MCF 10A (cell line): ENCODE measurements at regions of chr13 and their contacts with region 1.

Region 1: GRCh38 chr13:48892053-48892690 is 83.5 kb upstream of the FNDC3A start:
- DNase-seq: peak; percentile 89
- H3K4me3 Mint-ChIP-seq: no peak overlapping the region
- H3K27ac Mint-ChIP-seq: peak overlapping the region; percentile 86
- H3K4me1 Mint-ChIP-seq: peaks cover 14% of the 10 kb centered on the region
- H3K27me3 Mint-ChIP-seq: no peaks in the 10 kb centered on the region
- CTCF ChIP-seq: no peak

Region 2: GRCh38 chr13:48679911-48680680 is 212.1 kb before region 1 on chr13:
- CTCF ChIA-PET with region 1: no interaction called
- POLR2A ChIA-PET with region 1: no interaction called
- intact Hi-C with region 1: no loop called
- DNase-seq: no peak
- H3K4me3 Mint-ChIP-seq: no peak overlapping the region
- H3K27ac Mint-ChIP-seq: no peak overlapping the region
- H3K4me1 Mint-ChIP-seq: no peaks in the 10 kb centered on the region
- H3K27me3 Mint-ChIP-seq: peaks cover 65% of the 10 kb centered on the region
- CTCF ChIP-seq: no peak

Region 3: GRCh38 chr13:48783181-48783630 is 109.0 kb before region 1 on chr13:
- CTCF ChIA-PET with region 1: no interaction called
- POLR2A ChIA-PET with region 1: interaction called, 4 read pairs
- intact Hi-C with region 1: loop called (anchors 1 kb)
- DNase-seq: peak; percentile 99
- H3K4me3 Mint-ChIP-seq: peak overlapping the region; percentile 35
- H3K27ac Mint-ChIP-seq: peak overlapping the region; percentile 88
- H3K4me1 Mint-ChIP-seq: peaks cover 24% of the 10 kb centered on the region
- H3K27me3 Mint-ChIP-seq: no peaks in the 10 kb centered on the region
- CTCF ChIP-seq: no peak

Region 4: GRCh38 chr13:48853728-48854102 is 38.5 kb before region 1 on chr13:
- CTCF ChIA-PET with region 1: no interaction called
- POLR2A ChIA-PET with region 1: no interaction called
- intact Hi-C with region 1: no loop called
- DNase-seq: no peak
- H3K4me3 Mint-ChIP-seq: no peak overlapping the region
- H3K27ac Mint-ChIP-seq: no peak overlapping the region
- H3K4me1 Mint-ChIP-seq: no peaks in the 10 kb centered on the region
- H3K27me3 Mint-ChIP-seq: no peaks in the 10 kb centered on the region
- CTCF ChIP-seq: no peak

Region 5: GRCh38 chr13:49376121-49376520 is 483.9 kb after region 1 on chr13:
- CTCF ChIA-PET with region 1: no interaction called
- POLR2A ChIA-PET with region 1: no interaction called
- intact Hi-C with region 1: no loop called
- DNase-seq: peak; percentile 1
- H3K4me3 Mint-ChIP-seq: no peak overlapping the region
- H3K27ac Mint-ChIP-seq: no peak overlapping the region
- H3K4me1 Mint-ChIP-seq: peaks cover 11% of the 10 kb centered on the region
- H3K27me3 Mint-ChIP-seq: no peaks in the 10 kb centered on the region
- CTCF ChIP-seq: no peak